Endothelial cell of umbilical vein (primary cell): ENCODE measurements at regions of chr6 and their contacts with region 1.

Region 1: DNA sequence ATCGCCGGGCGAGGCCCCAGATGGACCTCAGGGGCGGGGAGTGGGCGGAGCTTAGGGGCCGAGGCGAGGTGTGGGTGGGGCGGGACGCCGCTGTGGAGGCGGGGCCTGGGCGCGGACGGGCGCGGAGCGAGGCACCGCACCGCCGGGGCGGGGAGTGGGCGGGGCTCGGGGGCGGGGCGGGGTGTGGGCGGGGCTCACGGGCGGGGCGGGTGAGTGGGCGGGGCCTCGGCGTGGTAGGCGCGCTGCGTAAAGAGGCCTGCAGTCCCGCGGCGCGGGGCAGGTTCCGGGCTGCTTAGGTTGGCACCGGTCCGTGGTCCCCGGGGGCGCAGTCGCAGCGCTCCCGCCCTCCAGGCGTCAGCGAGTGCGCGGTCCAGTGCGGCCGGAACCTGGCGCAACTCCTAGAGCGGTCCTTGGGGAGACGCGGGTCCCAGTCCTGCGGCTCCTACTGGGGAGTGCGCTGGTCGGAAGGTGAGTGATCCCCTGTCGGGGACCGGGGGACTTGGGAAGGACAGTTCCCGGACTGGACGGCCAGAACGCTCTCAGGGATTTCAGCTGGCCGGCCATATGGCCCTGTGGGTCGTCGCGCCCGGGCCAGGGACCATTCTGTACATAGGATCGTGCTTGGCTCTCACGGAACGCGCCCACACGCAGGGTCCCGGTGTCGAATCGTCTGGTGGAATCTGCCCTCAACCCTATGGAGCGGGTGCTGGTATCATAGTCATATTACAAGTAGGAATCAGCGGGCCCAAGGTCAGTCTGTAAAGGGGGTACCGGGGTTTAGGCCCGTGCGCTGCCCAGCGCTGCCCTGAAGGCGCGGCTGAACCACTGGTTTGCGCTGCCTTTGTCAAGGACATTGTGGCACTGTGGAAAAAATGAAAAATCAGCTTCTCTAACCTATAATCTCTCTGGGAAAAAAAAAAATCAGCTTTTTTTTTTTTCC is at the start of gene NQO2:
- DNase-seq: peak; percentile 86
- H3K4me3 ChIP-seq: peak within 1 kb of the TSS; percentile 51 to 66 (median 62)
- H3K27ac ChIP-seq: peak within 1 kb of the TSS; percentile 70
- H3K4me1 ChIP-seq: peaks cover 16% of the 10 kb centered on the region
- H3K27me3 ChIP-seq: no peaks in the 10 kb centered on the region
- CTCF ChIP-seq: no peak
- POLR2A ChIP-seq: peak; percentile 72
- total RNA-seq, gene NQO2: 27.6 and 31.6 TPM in 2 replicates

Region 2: DNA sequence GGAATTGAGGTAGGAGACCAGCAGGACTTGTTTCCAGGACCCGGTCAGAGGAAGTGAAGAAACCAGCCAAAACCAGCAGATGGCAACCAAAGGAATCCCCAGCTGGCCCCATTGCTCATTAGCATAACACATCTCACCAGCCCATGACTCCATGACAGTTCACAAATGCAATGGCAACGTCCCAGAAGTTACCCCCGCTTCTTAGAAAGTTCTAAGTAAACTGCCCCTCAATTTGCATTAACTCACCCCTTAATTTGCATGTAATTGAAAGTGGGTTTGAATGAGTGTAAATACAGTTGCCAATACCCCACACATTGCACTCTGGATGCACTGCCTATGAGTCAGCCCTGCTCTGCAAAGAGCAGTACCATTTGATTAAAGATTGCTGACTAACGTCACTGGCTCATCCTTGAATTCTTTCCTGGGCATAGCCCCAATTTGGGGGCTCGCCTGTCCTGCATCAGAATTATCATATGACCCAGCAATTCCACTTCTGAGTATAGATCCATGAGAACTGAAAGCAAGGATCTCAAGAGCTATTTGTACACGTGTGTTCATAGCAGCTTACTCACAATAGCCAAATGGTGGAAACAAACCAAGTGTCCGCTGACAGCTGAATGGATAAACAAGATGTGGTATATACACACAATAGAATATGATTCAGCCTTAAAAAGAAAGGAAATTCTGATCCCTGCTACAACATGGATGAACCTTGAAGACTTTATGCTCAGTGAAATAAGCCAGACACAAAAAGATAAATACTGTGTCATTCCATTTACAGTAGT is 285.6 kb before region 1 on chr6:
- CTCF ChIA-PET with region 1: no interaction called
- POLR2A ChIA-PET with region 1: no interaction called
- dilution Hi-C with region 1: no loop called
- intact Hi-C with region 1: no loop called
- DNase-seq: peak; percentile 80
- H3K4me3 ChIP-seq: no peak overlapping the region
- H3K27ac ChIP-seq: no peak overlapping the region
- H3K4me1 ChIP-seq: peaks cover 22% of the 10 kb centered on the region
- H3K27me3 ChIP-seq: no peaks in the 10 kb centered on the region
- CTCF ChIP-seq: no peak
- POLR2A ChIP-seq: no peak

Region 3: DNA sequence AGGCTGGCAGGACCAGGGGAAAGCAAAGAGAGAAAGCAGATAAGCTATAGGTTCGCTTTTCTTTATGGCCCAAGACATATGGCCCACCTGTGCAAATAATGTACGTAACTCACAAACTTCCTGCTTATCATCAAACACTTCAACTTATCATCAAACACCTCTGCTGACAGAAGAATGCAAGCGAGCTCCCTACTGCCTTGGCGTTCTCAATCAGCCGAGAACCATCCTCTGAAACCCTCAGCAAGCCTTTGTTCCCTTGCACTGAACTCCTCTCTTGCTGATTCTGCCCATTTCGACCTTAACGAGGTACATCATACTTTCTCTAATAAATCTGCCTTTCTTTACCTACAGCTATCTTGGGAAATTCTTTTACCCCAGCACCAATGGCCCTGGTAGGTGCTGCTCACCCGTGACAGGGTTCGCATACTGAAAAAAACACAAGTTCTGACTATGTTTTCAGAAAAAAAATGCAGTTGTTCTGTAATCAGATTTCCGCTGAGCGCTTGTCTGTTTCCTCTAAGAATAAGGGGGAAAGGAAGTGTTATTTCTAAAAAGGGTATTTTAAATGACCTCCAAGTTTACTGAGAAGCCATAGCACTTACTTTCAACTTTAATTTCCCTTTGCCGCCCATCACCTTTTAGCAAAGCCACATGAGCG is 56.8 kb before region 1 on chr6:
- CTCF ChIA-PET with region 1: no interaction called
- POLR2A ChIA-PET with region 1: no interaction called
- dilution Hi-C with region 1: no loop called
- intact Hi-C with region 1: no loop called
- DNase-seq: peak; percentile 93
- H3K4me3 ChIP-seq: no peak overlapping the region
- H3K27ac ChIP-seq: peak overlapping the region; percentile 48
- H3K4me1 ChIP-seq: peaks cover 20% of the 10 kb centered on the region
- H3K27me3 ChIP-seq: no peaks in the 10 kb centered on the region
- CTCF ChIP-seq: no peak
- POLR2A ChIP-seq: no peak

Region 4: GRCh38 chr6:3023663-3024483 is 24.0 kb after region 1 on chr6:
- CTCF ChIA-PET with region 1: interaction called, 18 read pairs
- POLR2A ChIA-PET with region 1: no interaction called
- dilution Hi-C with region 1: no loop called
- intact Hi-C with region 1: loop called (anchors 1 kb)
- DNase-seq: peak; percentile 65
- H3K4me3 ChIP-seq: peak overlapping the region in 1 of 3 experiments; percentile 33
- H3K27ac ChIP-seq: peak overlapping the region; percentile 78
- H3K4me1 ChIP-seq: peaks cover 19% of the 10 kb centered on the region
- H3K27me3 ChIP-seq: no peaks in the 10 kb centered on the region
- CTCF ChIP-seq: no peak
- POLR2A ChIP-seq: no peak

Region 5: DNA sequence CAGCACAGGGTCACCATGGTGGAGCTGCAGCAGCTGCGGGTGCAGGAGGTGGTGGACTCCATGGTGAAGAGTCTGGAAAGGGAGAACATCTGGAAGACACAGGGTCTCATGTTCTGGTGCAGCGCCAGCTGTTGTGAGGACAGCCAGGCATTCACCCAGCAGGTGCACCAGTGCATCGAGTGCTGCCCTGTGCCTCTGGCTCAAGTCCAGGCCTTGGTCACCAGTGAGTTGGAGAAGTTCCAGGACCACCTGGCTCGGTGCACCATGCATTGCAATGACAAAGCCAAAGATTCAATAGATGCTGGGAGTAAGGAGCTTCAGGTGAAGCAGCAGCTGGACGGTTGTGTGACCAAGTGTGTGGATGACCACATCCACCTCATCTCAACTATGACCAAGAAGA is 45.5 kb after region 1 on chr6:
- CTCF ChIA-PET with region 1: interaction called, 13 read pairs
- POLR2A ChIA-PET with region 1: no interaction called
- dilution Hi-C with region 1: no loop called
- intact Hi-C with region 1: no loop called
- DNase-seq: no peak
- H3K4me3 ChIP-seq: no peak overlapping the region
- H3K27ac ChIP-seq: no peak overlapping the region
- H3K4me1 ChIP-seq: no peaks in the 10 kb centered on the region
- H3K27me3 ChIP-seq: peaks cover 3 to 15% of the 10 kb centered on the region in 2 experiments
- CTCF ChIP-seq: no peak
- POLR2A ChIP-seq: no peak

Region 6: GRCh38 chr6:3061501-3061941 is 61.6 kb after region 1 on chr6:
- CTCF ChIA-PET with region 1: interaction called, 126 read pairs
- POLR2A ChIA-PET with region 1: no interaction called
- dilution Hi-C with region 1: no loop called
- intact Hi-C with region 1: no loop called
- DNase-seq: no peak
- H3K4me3 ChIP-seq: no peak overlapping the region
- H3K27ac ChIP-seq: no peak overlapping the region
- H3K4me1 ChIP-seq: peaks cover 4% of the 10 kb centered on the region
- H3K27me3 ChIP-seq: peaks cover 3 to 11% of the 10 kb centered on the region in 2 experiments
- CTCF ChIP-seq: no peak
- POLR2A ChIP-seq: no peak

Region 7: GRCh38 chr6:3118353-3119039 is 118.6 kb after region 1 on chr6 and contains the start of gene BPHL:
- CTCF ChIA-PET with region 1: interaction called, 4 read pairs
- POLR2A ChIA-PET with region 1: no interaction called
- dilution Hi-C with region 1: no loop called
- intact Hi-C with region 1: loop called (anchors 2 kb)
- DNase-seq: peak; percentile 94
- H3K4me3 ChIP-seq: peak within 1 kb of the TSS; percentile 54 to 98 (median 74)
- H3K27ac ChIP-seq: peak within 1 kb of the TSS; percentile 88
- H3K4me1 ChIP-seq: peaks cover 10% of the 10 kb centered on the region
- H3K27me3 ChIP-seq: no peaks in the 10 kb centered on the region
- CTCF ChIP-seq: no peak
- POLR2A ChIP-seq: peak; percentile 69
- total RNA-seq, gene BPHL: 14.8 and 16.6 TPM in 2 replicates

Region 8: GRCh38 chr6:3251462-3252314 is 251.8 kb after region 1 on chr6:
- CTCF ChIA-PET with region 1: interaction called, 8 read pairs
- POLR2A ChIA-PET with region 1: no interaction called
- dilution Hi-C with region 1: no loop called
- intact Hi-C with region 1: loop called (anchors 1 kb)
- DNase-seq: peak; percentile 79
- H3K4me3 ChIP-seq: no peak overlapping the region
- H3K27ac ChIP-seq: no peak overlapping the region
- H3K4me1 ChIP-seq: no peaks in the 10 kb centered on the region
- H3K27me3 ChIP-seq: peaks cover 11 to 14% of the 10 kb centered on the region in 2 experiments
- CTCF ChIP-seq: peak; percentile 95 to 97
- POLR2A ChIP-seq: no peak